ENCODE measurements at regions of chr9 and their contacts with region 1.

Region 1: DNA sequence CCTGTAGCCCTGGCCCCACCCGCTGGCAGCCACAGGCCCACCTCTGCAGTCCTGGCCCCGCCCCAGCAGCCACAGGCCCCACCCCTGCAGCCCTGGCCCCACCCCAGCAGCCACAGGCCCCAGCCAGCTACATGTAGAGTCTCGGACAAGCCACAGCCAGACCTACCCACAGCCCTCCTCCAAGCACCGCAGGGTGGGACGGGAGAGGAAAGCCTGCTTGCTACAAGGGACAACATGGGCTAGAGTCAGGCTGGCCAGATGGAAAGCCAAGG is 49.5 kb upstream of the SARDH start:
- DNase-seq: peak; percentile 73
- ATAC-seq: peak; percentile 98
- H3K4me3 Mint-ChIP-seq: no peak overlapping the region
- H3K27ac Mint-ChIP-seq: no peak overlapping the region
- H3K4me1 Mint-ChIP-seq: no peaks in the 10 kb centered on the region
- H3K27me3 Mint-ChIP-seq: no peaks in the 10 kb centered on the region
- CTCF ChIP-seq: no peak

Region 2: GRCh38 chr9:133768859-133769425 is 18.7 kb before region 1 on chr9:
- CTCF ChIA-PET with region 1: interaction called, 24 read pairs
- POLR2A ChIA-PET with region 1: interaction called, 3 read pairs
- DNase-seq: peak; percentile 70
- ATAC-seq: peak; percentile 65; the same call in 1 of the 2 replicates
- H3K4me3 Mint-ChIP-seq: no peak overlapping the region
- H3K27ac Mint-ChIP-seq: no peak overlapping the region
- H3K4me1 Mint-ChIP-seq: no peaks in the 10 kb centered on the region
- H3K27me3 Mint-ChIP-seq: no peaks in the 10 kb centered on the region
- CTCF ChIP-seq: no peak

Region 3: GRCh38 chr9:133848471-133849109 is 60.9 kb after region 1 on chr9:
- CTCF ChIA-PET with region 1: no interaction called
- POLR2A ChIA-PET with region 1: no interaction called
- DNase-seq: no peak
- ATAC-seq: no peak
- H3K4me3 Mint-ChIP-seq: no peak overlapping the region
- H3K27ac Mint-ChIP-seq: 0 out of 2 replicates have a peak overlapping the region, but pooled peaks have one; percentile 33
- H3K4me1 Mint-ChIP-seq: 0 out of 2 replicates have a peak, but pooled peaks cover 6% of the 10 kb centered on the region
- H3K27me3 Mint-ChIP-seq: no peaks in the 10 kb centered on the region
- CTCF ChIP-seq: no peak

Region 4: GRCh38 chr9:134035041-134036039 is 247.7 kb after region 1 on chr9:
- CTCF ChIA-PET with region 1: no interaction called
- POLR2A ChIA-PET with region 1: no interaction called
- DNase-seq: no peak
- ATAC-seq: no peak
- H3K4me3 Mint-ChIP-seq: no peak overlapping the region
- H3K27ac Mint-ChIP-seq: no peak overlapping the region
- H3K4me1 Mint-ChIP-seq: no peaks in the 10 kb centered on the region
- H3K27me3 Mint-ChIP-seq: no peaks in the 10 kb centered on the region
- CTCF ChIP-seq: no peak

Measured in WTC11 (cell line).